Heart left ventricle (tissue), 16 donors: ENCODE measurements at regions of chr1 and their contacts with region 1.

Region 1: DNA sequence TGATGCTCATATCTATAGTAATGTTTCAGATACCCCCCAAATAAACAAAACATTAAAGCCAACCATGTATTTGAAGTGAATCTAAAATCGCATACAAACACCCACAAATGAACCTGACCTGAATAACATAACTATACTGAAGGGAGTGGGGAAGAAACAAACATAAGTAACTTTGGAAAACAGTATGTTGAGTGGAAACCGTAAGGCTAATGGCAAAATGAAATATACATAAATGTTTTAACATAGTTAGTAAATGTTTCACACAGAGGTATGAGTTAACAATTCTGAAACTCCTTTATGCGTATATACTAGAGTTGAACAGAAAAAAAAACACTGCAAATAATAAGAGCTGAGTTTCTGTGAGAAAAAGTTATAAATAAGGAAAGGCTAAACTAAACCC is 125.6 kb downstream of the ACBD6 start:
- DNase-seq: no peak
- ATAC-seq: no peak
- H3K4me3 ChIP-seq: no peak overlapping the region
- H3K27ac ChIP-seq: no peak overlapping the region
- H3K4me1 ChIP-seq: no peaks in the 10 kb centered on the region
- H3K27me3 ChIP-seq: no peaks in the 10 kb centered on the region
- CTCF ChIP-seq: no peak
- POLR2A ChIP-seq: no peak

Region 2: GRCh38 chr1:180343931-180344769 is 32.6 kb before region 1 on chr1:
- intact Hi-C with region 1: no loop called
- DNase-seq: peak in 3 of 5 donors; percentile 18 to 52 (median 31)
- ATAC-seq: peak in 1 of 4 donors; percentile 30
- H3K4me3 ChIP-seq: no peak overlapping the region
- H3K27ac ChIP-seq: no peak overlapping the region
- H3K4me1 ChIP-seq: peaks cover 0 to 12% (median 6%) of the 10 kb centered on the region in 12 donors
- H3K27me3 ChIP-seq: no peaks in the 10 kb centered on the region
- CTCF ChIP-seq: no peak
- POLR2A ChIP-seq: no peak

Region 3: GRCh38 chr1:180402001-180402400 is 25.2 kb after region 1 on chr1:
- intact Hi-C with region 1: loop called in 1 of 10 experiments (anchors 2 kb)
- DNase-seq: no peak
- ATAC-seq: no peak
- H3K4me3 ChIP-seq: no peak overlapping the region
- H3K27ac ChIP-seq: no peak overlapping the region
- H3K4me1 ChIP-seq: peaks cover 0 to under 1% (median 0%) of the 10 kb centered on the region in 12 donors
- H3K27me3 ChIP-seq: no peaks in the 10 kb centered on the region
- CTCF ChIP-seq: no peak
- POLR2A ChIP-seq: no peak